ENCODE measurements at regions of chr17 and their contacts with region 1.

Region 1: DNA sequence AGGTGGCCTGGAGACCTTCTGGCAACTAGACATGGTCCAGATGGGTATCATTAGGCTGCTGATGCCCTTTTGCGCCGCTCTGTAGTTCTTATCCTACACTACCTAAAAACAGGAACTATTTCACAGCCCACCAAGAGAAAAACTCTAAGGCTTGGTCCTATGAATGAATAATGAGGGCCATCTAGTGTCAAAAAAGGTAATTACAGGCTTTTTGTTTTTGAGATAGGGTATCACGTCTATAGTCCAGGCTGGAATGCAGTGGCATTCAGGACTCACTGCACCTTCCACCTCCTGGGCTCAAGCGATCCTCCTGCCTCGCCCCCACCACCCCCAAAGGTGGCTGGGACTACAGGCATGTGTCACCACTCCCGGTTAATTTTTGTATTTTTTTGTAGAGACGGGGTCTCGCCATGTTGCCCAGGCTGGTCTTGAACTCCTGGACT is 20.9 kb downstream of the COIL start:
- DNase-seq: no peak
- ATAC-seq: peak; percentile 25 to 82 (median 62)
- H3K4me3 ChIP-seq: no peak overlapping the region
- H3K27ac ChIP-seq: no peak overlapping the region
- H3K4me1 ChIP-seq: no peaks in the 10 kb centered on the region
- H3K27me3 ChIP-seq: no peaks in the 10 kb centered on the region
- CTCF ChIP-seq: peak; percentile 68

Region 2: GRCh38 chr17:56819431-56820145 is 120.3 kb before region 1 on chr17:
- intact Hi-C with region 1: loop called (anchors 1 to 2 kb)
- DNase-seq: peak in 1 of 2 donors; percentile 27
- ATAC-seq: peak; percentile 77 to 91 (median 82)
- H3K4me3 ChIP-seq: no peak overlapping the region
- H3K27ac ChIP-seq: no peak overlapping the region
- H3K4me1 ChIP-seq: peaks cover 4% of the 10 kb centered on the region
- H3K27me3 ChIP-seq: no peaks in the 10 kb centered on the region
- CTCF ChIP-seq: peak; percentile 89

Region 3: GRCh38 chr17:56833809-56834379 is 106.0 kb before region 1 on chr17 and contains the starts of genes C17orf67 and DGKE:
- intact Hi-C with region 1: no loop called
- DNase-seq: peak; percentile 98 to 99
- ATAC-seq: peak; percentile 98 to 99 (median 98)
- H3K4me3 ChIP-seq: peak within 1 kb of the TSS; percentile 78
- H3K27ac ChIP-seq: peak within 1 kb of the TSS; percentile 74
- H3K4me1 ChIP-seq: peaks cover 2% of the 10 kb centered on the region
- H3K27me3 ChIP-seq: peaks cover 0 to 8% (median 2%) of the 10 kb centered on the region in 3 donors
- CTCF ChIP-seq: no peak
- total RNA-seq, gene C17orf67: 0.20 to 1.1 (median 0.35) TPM
- total RNA-seq, gene DGKE: 0.76 to 3.2 (median 1.4) TPM

Region 4: GRCh38 chr17:56891784-56892183 is 48.1 kb before region 1 on chr17:
- intact Hi-C with region 1: loop called in 1 of 2 experiments (anchors 5 kb)
- DNase-seq: peak; percentile 37 to 64
- ATAC-seq: peak in 2 of 4 donors; percentile 46 to 51
- H3K4me3 ChIP-seq: no peak overlapping the region
- H3K27ac ChIP-seq: no peak overlapping the region
- H3K4me1 ChIP-seq: no peaks in the 10 kb centered on the region
- H3K27me3 ChIP-seq: no peaks in the 10 kb centered on the region
- CTCF ChIP-seq: peak; percentile 43

Region 5: GRCh38 chr17:56908001-56908542 is 31.9 kb before region 1 on chr17:
- intact Hi-C with region 1: loop called in 1 of 2 experiments (anchors 5 kb)
- DNase-seq: peak; percentile 62 to 77
- ATAC-seq: peak in 2 of 4 donors; percentile 45 to 48
- H3K4me3 ChIP-seq: no peak overlapping the region
- H3K27ac ChIP-seq: peak overlapping the region; percentile 10
- H3K4me1 ChIP-seq: peaks cover 30% of the 10 kb centered on the region
- H3K27me3 ChIP-seq: no peaks in the 10 kb centered on the region
- CTCF ChIP-seq: no peak

Region 6: GRCh38 chr17:57016747-57017082 is 76.8 kb after region 1 on chr17:
- intact Hi-C with region 1: no loop called
- DNase-seq: no peak
- ATAC-seq: no peak
- H3K4me3 ChIP-seq: no peak overlapping the region
- H3K27ac ChIP-seq: no peak overlapping the region
- H3K4me1 ChIP-seq: no peaks in the 10 kb centered on the region
- H3K27me3 ChIP-seq: no peaks in the 10 kb centered on the region
- CTCF ChIP-seq: no peak